ENCODE measurements at regions of chr1 and their contacts with region 1.

Region 1: GRCh38 chr1:39609618-39610331 is 29.7 kb downstream of the HEYL start:
- DNase-seq: peak; percentile 77 to 85
- ATAC-seq: peak; percentile 28 to 75 (median 71)
- H3K4me3 ChIP-seq: no peak overlapping the region
- H3K27ac ChIP-seq: no peak overlapping the region
- H3K4me1 ChIP-seq: no peaks in the 10 kb centered on the region
- H3K27me3 ChIP-seq: peaks cover 0 to 1% (median 0%) of the 10 kb centered on the region in 3 donors
- CTCF ChIP-seq: peak; percentile 32

Region 2: DNA sequence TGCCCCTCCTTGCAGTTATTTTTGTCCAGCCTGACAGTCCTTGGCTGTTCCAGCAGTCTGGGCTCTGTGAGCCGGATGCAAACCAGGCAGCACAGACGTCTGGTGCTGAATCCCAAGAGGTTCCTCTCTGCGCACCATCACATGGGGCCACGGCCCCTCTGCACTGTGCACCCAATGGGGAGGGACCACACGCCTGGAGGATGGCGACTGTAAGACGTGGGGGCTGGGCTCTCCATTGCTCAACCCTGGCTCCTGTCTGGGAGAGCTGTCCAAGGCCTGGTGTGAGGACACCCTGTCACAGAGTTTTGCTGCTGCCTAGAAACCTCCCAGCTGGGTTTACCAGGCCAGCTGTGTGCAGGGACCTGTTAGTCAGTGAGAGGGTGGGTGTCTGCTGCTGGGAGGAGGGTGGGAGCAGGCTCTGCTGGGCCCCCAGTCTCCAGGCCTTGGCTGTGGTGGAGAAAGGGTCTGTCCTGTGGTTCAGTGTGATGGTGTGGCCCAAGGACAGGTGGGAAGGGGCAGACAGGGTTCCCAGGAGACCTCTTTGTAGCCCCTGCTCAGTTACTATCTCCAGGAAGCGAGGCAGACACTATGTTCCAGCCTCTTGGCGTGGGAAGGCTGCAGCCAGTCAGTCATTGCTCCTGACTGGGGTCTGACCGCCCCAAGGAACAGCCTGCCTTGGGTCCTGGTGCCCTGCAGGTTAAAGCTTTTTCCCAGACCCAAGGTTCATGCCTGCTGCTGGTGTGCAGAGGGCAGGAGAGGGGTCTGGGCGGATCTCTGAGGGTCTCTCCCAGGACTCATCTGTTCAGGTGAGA is 15.9 kb after region 1 on chr1:
- intact Hi-C with region 1: loop called in 1 of 2 experiments (anchors 2 kb)
- DNase-seq: peak; percentile 80 to 91
- ATAC-seq: peak; percentile 80 to 89 (median 87)
- H3K4me3 ChIP-seq: no peak overlapping the region
- H3K27ac ChIP-seq: peak overlapping the region; percentile 64
- H3K4me1 ChIP-seq: peaks cover 16% of the 10 kb centered on the region
- H3K27me3 ChIP-seq: no peaks in the 10 kb centered on the region
- CTCF ChIP-seq: no peak

Region 3: DNA sequence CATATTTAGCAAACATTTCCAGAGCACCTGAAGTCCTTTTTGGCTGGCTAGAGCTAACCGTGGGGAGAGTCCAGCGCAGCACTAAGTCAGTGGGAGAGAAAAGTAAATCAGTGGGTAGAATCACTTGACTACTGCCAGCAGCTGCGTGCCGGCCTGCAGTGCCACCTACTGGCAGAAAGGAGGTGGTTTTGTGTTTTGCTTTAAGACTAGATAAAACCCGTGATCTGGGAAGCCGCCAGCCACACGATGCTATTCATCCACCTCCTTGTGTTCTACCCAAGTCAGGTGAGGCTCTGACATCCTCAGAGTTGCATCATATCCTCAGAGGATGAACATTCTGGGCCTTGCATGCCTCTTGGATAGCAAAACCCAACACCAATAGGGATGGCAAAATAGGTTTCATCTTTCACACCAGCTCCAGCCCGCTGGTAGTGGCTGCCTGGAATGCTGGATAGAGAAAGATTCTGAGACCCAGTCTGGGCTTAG is 43.8 kb after region 1 on chr1:
- intact Hi-C with region 1: loop called (anchors 1 kb)
- DNase-seq: peak; percentile 85 to 92
- ATAC-seq: peak; percentile 77 to 87 (median 82)
- H3K4me3 ChIP-seq: no peak overlapping the region
- H3K27ac ChIP-seq: peak overlapping the region; percentile 41
- H3K4me1 ChIP-seq: peaks cover 14% of the 10 kb centered on the region
- H3K27me3 ChIP-seq: no peaks in the 10 kb centered on the region
- CTCF ChIP-seq: peak; percentile 94

Region 4: GRCh38 chr1:39720094-39720999 is 110.6 kb after region 1 on chr1:
- intact Hi-C with region 1: loop called (anchors 1 to 2 kb)
- DNase-seq: no peak
- ATAC-seq: peak; percentile 91 to 97 (median 96)
- H3K4me3 ChIP-seq: no peak overlapping the region
- H3K27ac ChIP-seq: peak overlapping the region; percentile 62
- H3K4me1 ChIP-seq: no peaks in the 10 kb centered on the region
- H3K27me3 ChIP-seq: peaks cover 0 to 3% (median 0%) of the 10 kb centered on the region in 3 donors
- CTCF ChIP-seq: peak; percentile 72